PC-9 (cell line): ENCODE measurements at regions of chr1 and their contacts with region 1.

Region 1: GRCh38 chr1:93734999-93735398 is 53.4 kb upstream of the BCAR3 start:
- DNase-seq: no peak
- H3K4me3 ChIP-seq: no peak overlapping the region
- H3K27ac ChIP-seq: no peak overlapping the region
- H3K4me1 ChIP-seq: peaks cover 41% of the 10 kb centered on the region
- H3K27me3 ChIP-seq: no peaks in the 10 kb centered on the region
- CTCF ChIP-seq: peak; percentile 50; the same call in 1 of the 2 replicates

Region 2: GRCh38 chr1:93615582-93616150 is 119.3 kb before region 1 on chr1:
- CTCF ChIA-PET with region 1: no interaction called
- POLR2A ChIA-PET with region 1: interaction called, 3 read pairs
- intact Hi-C with region 1: loop called (anchors 5 kb)
- DNase-seq: peak; percentile 33 to 57
- H3K4me3 ChIP-seq: peak overlapping the region; percentile 3; the same call in 1 of the 2 replicates
- H3K27ac ChIP-seq: peak overlapping the region; percentile 81
- H3K4me1 ChIP-seq: peaks cover 77% of the 10 kb centered on the region
- H3K27me3 ChIP-seq: no peaks in the 10 kb centered on the region
- CTCF ChIP-seq: no peak

Region 3: DNA sequence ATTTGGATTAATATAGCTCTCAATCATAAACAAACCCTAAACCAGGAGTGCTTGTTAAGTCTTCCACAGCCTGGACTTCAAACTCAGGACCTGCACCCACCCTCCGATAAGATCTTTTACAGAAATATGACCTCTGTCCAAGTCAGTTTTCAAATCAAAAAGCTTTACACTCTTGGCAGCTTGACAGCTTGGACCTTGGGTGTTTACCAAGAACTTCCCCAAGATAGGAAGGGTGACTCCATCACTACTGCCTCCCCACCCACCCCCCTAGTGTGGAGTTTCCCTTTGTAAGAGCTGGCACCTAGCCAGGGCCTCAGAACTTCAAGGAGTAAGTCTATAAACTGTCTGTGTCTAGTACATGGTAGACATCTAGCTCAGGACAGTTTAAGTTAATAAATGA is 62.9 kb before region 1 on chr1:
- CTCF ChIA-PET with region 1: interaction called, 14 read pairs
- POLR2A ChIA-PET with region 1: interaction called, 12 read pairs
- intact Hi-C with region 1: loop called (anchors 2 kb)
- DNase-seq: peak; percentile 70 to 89
- H3K4me3 ChIP-seq: peak overlapping the region; percentile 22; the same call in 1 of the 2 replicates
- H3K27ac ChIP-seq: peak overlapping the region; percentile 62
- H3K4me1 ChIP-seq: peaks cover 100% of the 10 kb centered on the region
- H3K27me3 ChIP-seq: no peaks in the 10 kb centered on the region
- CTCF ChIP-seq: no peak

Region 4: DNA sequence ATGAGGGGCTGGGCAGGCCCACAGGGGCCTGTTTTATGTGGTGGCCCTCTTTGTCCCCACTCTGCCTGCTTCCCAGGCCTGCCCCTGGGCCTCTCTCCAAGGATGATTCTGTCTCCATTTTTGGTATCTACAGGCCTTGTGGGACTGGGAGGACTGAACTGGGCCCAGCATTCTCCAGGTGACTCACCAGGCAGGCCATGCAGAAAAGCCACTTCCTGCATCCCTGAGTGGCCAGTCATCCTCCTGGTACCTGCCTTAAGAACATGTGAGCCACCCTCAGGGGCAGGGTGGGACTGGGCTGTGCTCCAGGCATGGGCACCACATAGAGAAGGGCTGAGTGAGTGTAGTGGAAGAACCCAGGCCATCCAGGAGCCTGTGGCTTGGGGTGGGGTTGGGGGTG is 33.4 kb before region 1 on chr1:
- CTCF ChIA-PET with region 1: no interaction called
- POLR2A ChIA-PET with region 1: interaction called, 12 read pairs
- intact Hi-C with region 1: loop called (anchors 1 kb)
- DNase-seq: peak; percentile 97 to 100
- H3K4me3 ChIP-seq: no peak overlapping the region
- H3K27ac ChIP-seq: peak overlapping the region; percentile 97
- H3K4me1 ChIP-seq: peaks cover 68% of the 10 kb centered on the region
- H3K27me3 ChIP-seq: no peaks in the 10 kb centered on the region
- CTCF ChIP-seq: no peak

Region 5: DNA sequence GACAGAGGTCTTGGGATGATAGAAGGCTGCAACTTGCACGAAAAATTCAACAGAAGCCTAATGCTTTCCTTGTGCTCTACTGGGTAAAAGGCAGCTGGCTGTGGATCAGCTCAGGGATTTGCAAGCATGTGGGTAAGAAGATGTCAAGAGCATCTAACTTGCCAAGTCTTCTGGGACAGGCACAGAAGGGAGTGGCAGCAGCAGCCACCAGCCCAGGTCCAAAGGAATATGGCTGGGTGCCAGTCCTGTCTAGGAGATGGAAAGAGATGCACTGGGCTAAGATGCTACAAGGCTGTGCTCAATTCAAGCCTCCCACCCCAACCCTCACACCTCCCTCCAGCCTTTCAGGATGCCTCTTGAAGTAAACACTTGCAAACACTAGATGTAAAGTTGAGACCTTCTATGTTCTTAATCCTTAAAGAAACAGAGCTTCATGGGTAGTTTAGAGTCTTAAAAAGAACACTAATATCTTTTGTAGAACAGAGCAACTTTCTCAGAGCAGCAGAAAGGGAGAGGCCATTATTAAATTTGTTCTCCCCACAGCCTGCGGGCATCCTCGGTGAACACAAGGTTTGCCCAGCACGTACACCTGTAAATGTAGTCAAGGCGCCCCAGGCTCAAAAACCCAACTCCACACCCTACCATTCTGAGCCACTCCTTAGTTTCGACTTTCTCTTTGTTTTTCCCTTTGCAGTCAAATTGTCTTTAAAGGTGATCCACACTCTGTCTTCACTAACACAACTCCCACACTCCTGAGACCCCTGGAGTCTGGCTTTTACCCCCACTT is 11.2 kb after region 1 on chr1:
- CTCF ChIA-PET with region 1: no interaction called
- POLR2A ChIA-PET with region 1: no interaction called
- intact Hi-C with region 1: no loop called
- DNase-seq: no peak
- H3K4me3 ChIP-seq: no peak overlapping the region
- H3K27ac ChIP-seq: no peak overlapping the region
- H3K4me1 ChIP-seq: peaks cover 18% of the 10 kb centered on the region
- H3K27me3 ChIP-seq: no peaks in the 10 kb centered on the region
- CTCF ChIP-seq: no peak

Region 6: DNA sequence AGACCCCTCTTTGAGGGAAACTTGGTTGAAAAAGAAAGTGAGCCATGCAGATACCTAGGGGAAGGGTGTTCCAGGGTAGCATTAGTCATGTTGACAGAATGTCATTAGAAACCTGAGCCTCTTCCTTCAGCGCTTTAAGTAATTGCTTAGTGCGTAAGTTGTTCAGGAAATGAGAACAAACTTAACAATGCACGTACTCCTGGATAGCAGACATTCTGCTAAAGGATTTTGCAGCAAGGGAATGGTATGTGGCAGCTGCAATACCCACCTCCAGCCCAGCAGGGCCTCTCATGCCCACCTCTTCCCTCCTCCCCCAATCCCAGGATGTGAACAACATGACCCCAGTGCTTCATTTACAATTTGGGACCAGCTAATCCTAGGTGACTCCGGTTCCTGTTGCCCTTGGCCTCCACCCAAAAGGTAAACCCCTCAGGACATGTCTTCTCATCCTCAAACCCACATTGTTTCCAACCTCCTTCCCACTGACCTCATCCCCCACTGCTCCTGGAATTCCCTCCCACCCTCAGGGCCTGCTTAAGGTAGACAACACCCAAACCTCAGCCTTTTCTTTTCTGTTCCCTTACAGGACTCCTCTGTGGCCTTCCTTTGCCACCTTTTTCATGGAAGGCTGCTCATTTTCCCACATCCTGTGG is 44.7 kb after region 1 on chr1:
- CTCF ChIA-PET with region 1: no interaction called
- POLR2A ChIA-PET with region 1: interaction called, 3 read pairs
- intact Hi-C with region 1: loop called (anchors 1 kb)
- DNase-seq: peak; percentile 93 to 100
- H3K4me3 ChIP-seq: peak overlapping the region; percentile 15; the same call in 1 of the 2 replicates
- H3K27ac ChIP-seq: peak overlapping the region; percentile 95
- H3K4me1 ChIP-seq: peaks cover 77% of the 10 kb centered on the region
- H3K27me3 ChIP-seq: no peaks in the 10 kb centered on the region
- CTCF ChIP-seq: peak; percentile 31; the same call in 1 of the 2 replicates

Region 7: GRCh38 chr1:94872771-94873521 is 1137.9 kb after region 1 on chr1:
- CTCF ChIA-PET with region 1: no interaction called
- POLR2A ChIA-PET with region 1: interaction called, 11 read pairs
- intact Hi-C with region 1: no loop called
- DNase-seq: no peak
- H3K4me3 ChIP-seq: no peak overlapping the region
- H3K27ac ChIP-seq: no peak overlapping the region
- H3K4me1 ChIP-seq: no peaks in the 10 kb centered on the region
- H3K27me3 ChIP-seq: no peaks in the 10 kb centered on the region
- CTCF ChIP-seq: no peak